K562 (cell line): ENCODE measurements at regions of chr16 and their contacts with region 1.

Region 1: DNA sequence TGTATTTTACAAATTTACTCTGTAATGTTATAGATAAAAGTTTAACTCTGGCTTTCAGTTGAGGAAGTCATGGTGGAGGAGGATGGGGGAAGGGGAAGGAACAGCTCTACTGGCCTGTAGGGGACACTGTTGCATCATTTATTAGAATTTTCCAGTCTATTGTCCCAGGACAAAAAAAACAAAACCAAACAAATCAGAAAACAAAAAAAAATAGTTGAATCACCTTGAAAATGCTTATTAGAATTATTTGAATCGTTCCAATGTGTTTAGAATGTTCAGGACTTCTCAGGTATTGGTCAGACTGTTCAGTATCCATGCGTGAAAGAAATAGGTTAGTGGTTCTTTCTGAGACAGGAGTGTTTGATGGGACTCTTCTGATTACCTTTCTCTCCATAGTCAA is 242.0 kb downstream of the FTO start:
- DNase-seq: peak; percentile 30 to 54 (median 41)
- ATAC-seq: peak; percentile 82; the same call in 2 of the 3 replicates
- H3K4me3 ChIP-seq: no peak overlapping the region
- H3K27ac ChIP-seq: no peak overlapping the region
- H3K4me1 ChIP-seq: no peaks in the 10 kb centered on the region
- H3K27me3 ChIP-seq: no peaks in the 10 kb centered on the region
- CTCF ChIP-seq: peak; percentile 47 to 90 (median 71)
- EP300 ChIP-seq: no peak
- POLR2A ChIP-seq: no peak
- RAD21 ChIP-seq: peak; percentile 72 to 77

Region 2: DNA sequence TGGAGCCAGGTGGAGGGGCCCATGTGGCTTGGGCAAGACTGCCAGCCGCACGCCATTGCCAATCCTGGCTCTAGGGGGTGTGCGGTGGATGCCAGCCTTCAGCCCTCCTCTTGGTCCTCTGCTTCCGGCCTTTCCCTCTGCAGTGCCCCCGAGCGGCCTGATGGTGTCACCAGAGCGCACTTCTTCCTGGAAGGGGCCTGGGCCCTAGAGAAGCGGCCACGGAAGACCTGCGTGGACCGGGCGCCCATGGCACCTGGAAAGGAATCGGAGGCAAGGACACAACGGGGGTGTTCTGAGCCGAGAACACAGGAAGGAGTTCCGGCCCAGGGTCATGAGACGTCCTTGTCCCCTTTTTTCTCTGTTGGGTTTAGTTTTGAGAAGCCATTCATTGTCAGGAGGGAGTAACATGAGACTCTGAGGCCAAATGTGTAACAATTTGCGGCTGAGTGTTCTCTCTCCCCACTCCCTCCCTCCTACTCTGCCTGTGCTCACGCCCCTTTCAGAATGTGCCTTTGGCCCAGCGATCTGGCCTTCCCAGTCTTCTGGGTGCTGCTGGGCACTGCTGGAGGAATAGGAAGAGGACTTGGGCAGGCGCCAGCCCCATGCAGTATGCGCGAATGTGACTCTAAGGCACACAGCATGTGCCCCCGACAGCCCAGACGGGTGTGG is 247.8 kb after region 1 on chr16:
- CTCF ChIA-PET with region 1: no interaction called
- POLR2A ChIA-PET with region 1: no interaction called
- in situ Hi-C with region 1: no loop called
- intact Hi-C with region 1: no loop called
- DNase-seq: peak; percentile 66 to 78 (median 72)
- ATAC-seq: peak; percentile 99
- H3K4me3 ChIP-seq: no peak overlapping the region
- H3K27ac ChIP-seq: no peak overlapping the region
- H3K4me1 ChIP-seq: peaks cover 0 to 12% of the 10 kb centered on the region in 2 experiments; a peak in 2 of 5 replicates
- H3K27me3 ChIP-seq: peaks cover 0 to 7% of the 10 kb centered on the region in 2 experiments; a peak in 1 of 5 replicates
- CTCF ChIP-seq: peak; percentile 72 to 82 (median 80)
- EP300 ChIP-seq: no peak
- POLR2A ChIP-seq: no peak
- RAD21 ChIP-seq: peak; percentile 21 to 51; a peak in 3 of 4 replicates

Region 3: GRCh38 chr16:55021595-55022475 is 1075.8 kb after region 1 on chr16:
- CTCF ChIA-PET with region 1: no interaction called
- POLR2A ChIA-PET with region 1: no interaction called
- in situ Hi-C with region 1: loop called (anchors 25 kb)
- intact Hi-C with region 1: no loop called
- DNase-seq: peak; percentile 66 to 86 (median 72)
- ATAC-seq: peak; percentile 98
- H3K4me3 ChIP-seq: no peak overlapping the region
- H3K27ac ChIP-seq: peak overlapping the region; percentile 40; the same call in 2 of the 3 replicates
- H3K4me1 ChIP-seq: peaks cover 0 to 4% of the 10 kb centered on the region in 2 experiments; a peak in 2 of 5 replicates
- H3K27me3 ChIP-seq: no peaks in the 10 kb centered on the region
- CTCF ChIP-seq: peak; percentile 53 to 64 (median 61); a peak in 5 of 6 replicates
- EP300 ChIP-seq: 0 out of 2 replicates have a peak, but pooled peaks have one; percentile 5
- POLR2A ChIP-seq: no peak
- RAD21 ChIP-seq: peak; percentile 40 to 57